Psoas muscle (tissue), 8 donors: ENCODE measurements at regions of chr12 and their contacts with region 1.

Region 1: DNA sequence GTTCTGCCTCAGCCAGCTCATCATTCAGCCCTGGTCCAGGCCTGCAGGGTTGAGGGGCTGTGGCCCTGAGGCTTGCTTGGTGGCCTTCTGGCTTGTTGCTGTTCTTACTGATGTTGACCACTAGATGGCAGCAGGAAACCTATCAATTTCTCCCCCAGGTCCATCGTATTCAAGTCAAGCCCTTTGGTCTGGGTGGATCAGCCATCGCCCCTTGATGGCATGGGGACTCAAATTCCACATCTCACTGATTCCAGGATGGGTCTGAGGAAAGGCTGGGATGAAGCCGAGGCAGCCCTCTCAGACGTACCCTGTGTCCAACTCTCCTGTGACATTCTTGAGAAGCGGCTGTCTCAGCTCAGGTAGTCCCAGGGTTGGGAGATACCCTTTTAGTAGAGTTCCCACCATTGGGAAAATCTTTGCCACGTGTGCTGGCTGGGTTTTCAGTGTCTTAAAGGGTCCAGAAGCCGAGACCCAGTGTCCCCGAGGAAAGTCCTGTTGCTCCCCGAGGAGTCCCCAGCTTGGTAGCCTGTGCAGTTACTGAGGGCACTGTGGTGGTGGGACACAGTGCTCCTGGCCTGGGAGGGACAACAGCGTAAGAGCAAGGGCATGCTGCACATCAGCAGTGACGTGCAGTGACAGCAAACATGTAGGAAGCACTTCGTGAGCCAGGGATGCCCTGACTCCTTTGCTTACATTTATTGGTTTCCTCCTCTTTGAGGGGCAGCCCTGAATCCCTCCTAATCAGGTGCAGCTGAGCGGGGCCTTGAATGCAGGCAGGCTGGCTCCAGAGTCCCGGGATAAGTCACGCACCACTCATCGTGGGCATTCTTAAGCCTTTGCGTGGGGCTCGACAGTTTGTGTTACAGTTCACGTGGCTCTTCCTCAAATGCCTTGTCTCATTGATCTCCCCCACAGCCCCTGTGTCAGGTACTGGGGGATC is 58.6 kb downstream of the TSPAN9 start:
- DNase-seq: no peak
- ATAC-seq: peak; percentile 75 to 88 (median 84)
- H3K4me3 ChIP-seq: no peak overlapping the region
- H3K27ac ChIP-seq: no peak overlapping the region
- H3K4me1 ChIP-seq: peaks cover 20% of the 10 kb centered on the region
- H3K27me3 ChIP-seq: no peaks in the 10 kb centered on the region
- CTCF ChIP-seq: peak; percentile 89

Region 2: GRCh38 chr12:3073438-3074250 is 62.1 kb before region 1 on chr12:
- intact Hi-C with region 1: loop called in 1 of 2 experiments (anchors 5 kb)
- DNase-seq: peak; percentile 84 to 92
- ATAC-seq: peak; percentile 48 to 71 (median 58)
- H3K4me3 ChIP-seq: peak overlapping the region; percentile 1
- H3K27ac ChIP-seq: no peak overlapping the region
- H3K4me1 ChIP-seq: peaks cover 24% of the 10 kb centered on the region
- H3K27me3 ChIP-seq: no peaks in the 10 kb centered on the region
- CTCF ChIP-seq: peak; percentile 98

Region 3: GRCh38 chr12:3275171-3276041 is 139.6 kb after region 1 on chr12:
- intact Hi-C with region 1: loop called (anchors 1 kb)
- DNase-seq: peak; percentile 73 to 89
- ATAC-seq: peak; percentile 77 to 92 (median 84)
- H3K4me3 ChIP-seq: no peak overlapping the region
- H3K27ac ChIP-seq: no peak overlapping the region
- H3K4me1 ChIP-seq: peaks cover 4% of the 10 kb centered on the region
- H3K27me3 ChIP-seq: no peaks in the 10 kb centered on the region
- CTCF ChIP-seq: peak; percentile 99

Region 4: GRCh38 chr12:3803865-3804472 is 668.2 kb after region 1 on chr12:
- intact Hi-C with region 1: loop called in 1 of 2 experiments (anchors 10 kb)
- DNase-seq: peak; percentile 66 to 79
- ATAC-seq: peak; percentile 75 to 92 (median 84)
- H3K4me3 ChIP-seq: no peak overlapping the region
- H3K27ac ChIP-seq: no peak overlapping the region
- H3K4me1 ChIP-seq: no peaks in the 10 kb centered on the region
- H3K27me3 ChIP-seq: no peaks in the 10 kb centered on the region
- CTCF ChIP-seq: peak; percentile 82